ENCODE measurements at regions of chrX and their contacts with region 1.

Region 1: DNA sequence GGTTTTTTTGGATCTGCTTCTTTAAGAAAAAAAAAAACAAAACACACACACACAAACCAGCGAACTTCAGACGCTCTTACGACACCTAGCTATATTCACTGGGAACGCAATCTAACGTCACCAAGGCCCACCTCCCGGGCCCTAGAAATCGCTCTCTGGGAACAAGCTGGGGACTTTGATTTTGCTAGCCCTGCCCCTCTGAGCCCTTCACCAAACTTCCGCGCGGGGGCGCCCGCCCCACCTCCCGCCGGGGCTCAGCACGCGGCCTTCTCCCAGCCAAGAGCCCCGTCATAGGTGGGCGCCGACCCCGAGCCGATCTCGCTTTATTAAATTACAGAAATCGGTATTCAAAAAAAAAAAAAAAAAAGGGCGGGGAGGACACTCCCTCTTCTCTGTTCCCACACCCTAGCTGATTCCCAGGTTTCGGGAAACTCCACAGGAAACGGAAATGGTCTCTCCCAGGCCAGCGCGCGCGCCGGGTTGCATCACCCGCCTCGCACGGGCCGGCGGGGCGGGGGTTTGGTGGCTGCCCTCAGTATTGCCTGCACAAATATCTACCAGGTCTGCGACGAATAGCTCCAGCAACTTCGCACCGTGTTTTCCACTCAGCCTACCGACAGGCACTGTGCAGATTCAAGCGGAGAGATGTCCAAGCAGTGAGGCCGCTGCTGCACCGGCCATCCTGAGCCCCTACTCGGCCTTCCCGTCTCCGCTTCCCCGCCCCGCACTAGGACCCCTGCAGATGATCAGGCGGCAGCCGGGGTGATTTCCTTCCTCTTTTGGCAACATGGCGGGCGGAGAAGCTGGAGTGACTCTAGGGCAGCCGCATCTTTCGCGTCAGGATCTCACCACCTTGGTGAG is at the start of gene EIF2S3:
- DNase-seq: peak; percentile 91
- ATAC-seq: peak; percentile 91
- H3K4me3 ChIP-seq: no peak within 1 kb of the TSS; a peak in 3 of 6 replicates
- H3K27ac ChIP-seq: no peak within 1 kb of the TSS
- H3K4me1 ChIP-seq: peaks cover 8% of the 10 kb centered on the region
- H3K27me3 ChIP-seq: no peaks in the 10 kb centered on the region; a peak in 1 of 5 replicates
- CTCF ChIP-seq: peak; percentile 67
- EP300 ChIP-seq: no peak
- POLR2A ChIP-seq: peak in 1 of 2 experiments; percentile 77
- RAD21 ChIP-seq: no peak
- total RNA-seq, gene EIF2S3: 183 and 238 TPM in 2 replicates

Region 2: DNA sequence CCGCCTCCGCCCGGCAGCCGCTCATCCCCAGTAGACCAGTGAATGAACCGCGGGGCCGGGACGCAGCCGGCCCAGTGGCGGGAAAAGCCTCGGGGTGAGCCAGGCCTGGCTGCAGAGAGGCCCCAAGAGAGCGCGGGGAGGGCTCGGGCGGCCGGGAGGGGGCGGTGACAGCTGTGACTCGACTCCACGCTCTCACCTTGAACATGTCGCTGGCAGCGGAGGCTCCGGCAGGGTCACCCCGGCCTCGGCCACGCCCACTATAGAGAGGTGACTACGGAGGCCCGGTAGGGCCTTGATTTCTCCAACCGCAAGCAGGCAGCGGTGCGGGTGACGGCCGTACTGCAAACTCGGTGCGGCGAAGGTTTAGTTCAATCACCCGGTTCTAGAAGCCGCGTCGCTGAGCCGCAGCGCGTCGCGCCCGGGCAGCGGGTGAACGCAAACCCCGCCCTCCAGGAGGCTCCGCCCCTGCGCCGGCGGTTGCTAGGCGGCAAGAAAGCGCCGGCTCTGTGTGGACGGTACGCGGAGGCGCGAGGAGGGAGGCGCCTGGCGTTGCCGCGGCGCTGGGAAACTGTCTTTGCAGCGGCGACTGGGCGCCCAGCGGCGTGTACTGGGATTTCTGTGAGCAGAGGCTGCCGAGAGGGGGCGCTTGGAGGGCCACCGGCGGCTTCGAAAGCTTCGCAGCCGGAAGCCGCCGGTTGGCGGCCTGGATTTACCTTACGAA is 146.8 kb before region 1 on chrX and contains the starts of genes APOO and CXorf58:
- CTCF ChIA-PET with region 1: no interaction called
- POLR2A ChIA-PET with region 1: interaction called, 7 read pairs
- in situ Hi-C with region 1: no loop called
- intact Hi-C with region 1: loop called (anchors 1 kb)
- DNase-seq: peak; percentile 81
- ATAC-seq: peak; percentile 96
- H3K4me3 ChIP-seq: peak within 1 kb of the TSS; percentile 65 to 75 (median 69)
- H3K27ac ChIP-seq: peak within 1 kb of the TSS; percentile 86
- H3K4me1 ChIP-seq: peaks cover 29% of the 10 kb centered on the region
- H3K27me3 ChIP-seq: no peaks in the 10 kb centered on the region
- CTCF ChIP-seq: peak; percentile 76
- EP300 ChIP-seq: no peak
- POLR2A ChIP-seq: peak in 1 of 2 experiments; percentile 40; a peak in 1 of 4 replicates
- RAD21 ChIP-seq: peak; percentile 41
- total RNA-seq, gene APOO: 22.1 and 27.8 TPM in 2 replicates
- total RNA-seq, gene CXorf58: not detected in 2 replicates

Region 3: GRCh38 chrX:24024819-24025740 is 29.3 kb before region 1 on chrX:
- CTCF ChIA-PET with region 1: interaction called, 6 read pairs
- POLR2A ChIA-PET with region 1: interaction called, 35 read pairs
- in situ Hi-C with region 1: no loop called
- intact Hi-C with region 1: loop called (anchors 2 kb)
- DNase-seq: peak; percentile 73
- ATAC-seq: peak; percentile 85
- H3K4me3 ChIP-seq: peak overlapping the region; percentile 77 to 83 (median 80)
- H3K27ac ChIP-seq: peak overlapping the region; percentile 90
- H3K4me1 ChIP-seq: peaks cover 9% of the 10 kb centered on the region; the same call in 1 of the 2 replicates
- H3K27me3 ChIP-seq: no peaks in the 10 kb centered on the region; a peak in 1 of 5 replicates
- CTCF ChIP-seq: peak; percentile 39; the same call in 1 of the 2 replicates
- EP300 ChIP-seq: peak in 1 of 2 experiments; percentile 32; a peak in 1 of 4 replicates
- POLR2A ChIP-seq: peak; percentile 89 to 98
- RAD21 ChIP-seq: no peak

Region 4: DNA sequence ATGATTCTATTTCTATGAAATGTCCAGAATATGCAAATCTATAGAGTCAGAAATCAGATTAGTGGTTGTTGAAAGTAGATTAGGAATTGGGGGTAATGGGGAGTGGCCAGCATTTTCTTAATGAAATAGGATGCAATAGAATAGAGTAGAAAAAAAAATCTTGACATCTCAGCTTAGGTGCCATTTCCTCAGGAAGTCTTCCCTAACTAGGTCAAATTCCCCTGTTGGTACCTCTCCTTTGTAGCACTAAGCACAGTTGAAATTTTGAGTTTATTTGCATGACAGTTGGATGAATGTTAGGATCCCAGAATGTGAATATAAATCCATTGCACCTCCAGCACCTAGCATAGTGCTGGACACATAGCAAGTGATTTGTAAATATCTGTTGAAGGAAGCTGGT is 380.6 kb after region 1 on chrX:
- CTCF ChIA-PET with region 1: no interaction called
- POLR2A ChIA-PET with region 1: no interaction called
- in situ Hi-C with region 1: no loop called
- intact Hi-C with region 1: no loop called
- DNase-seq: no peak
- ATAC-seq: no peak
- H3K4me3 ChIP-seq: no peak overlapping the region
- H3K27ac ChIP-seq: no peak overlapping the region
- H3K4me1 ChIP-seq: no peaks in the 10 kb centered on the region; the same call in 1 of the 2 replicates
- H3K27me3 ChIP-seq: no peaks in the 10 kb centered on the region; a peak in 1 of 5 replicates
- CTCF ChIP-seq: no peak
- EP300 ChIP-seq: no peak
- POLR2A ChIP-seq: no peak
- RAD21 ChIP-seq: no peak